Sciatic nerve (tissue), 2 donors: ENCODE measurements at regions of chr6 and their contacts with region 1.

Region 1: GRCh38 chr6:134174672-134175198 is 122.3 kb upstream of the SLC2A12 start:
- DNase-seq: peak; percentile 97
- ATAC-seq: peak; percentile 91

Region 2: GRCh38 chr6:134132494-134133141 is 42.1 kb before region 1 on chr6:
- intact Hi-C with region 1: no loop called
- DNase-seq: no peak
- ATAC-seq: no peak

Region 3: DNA sequence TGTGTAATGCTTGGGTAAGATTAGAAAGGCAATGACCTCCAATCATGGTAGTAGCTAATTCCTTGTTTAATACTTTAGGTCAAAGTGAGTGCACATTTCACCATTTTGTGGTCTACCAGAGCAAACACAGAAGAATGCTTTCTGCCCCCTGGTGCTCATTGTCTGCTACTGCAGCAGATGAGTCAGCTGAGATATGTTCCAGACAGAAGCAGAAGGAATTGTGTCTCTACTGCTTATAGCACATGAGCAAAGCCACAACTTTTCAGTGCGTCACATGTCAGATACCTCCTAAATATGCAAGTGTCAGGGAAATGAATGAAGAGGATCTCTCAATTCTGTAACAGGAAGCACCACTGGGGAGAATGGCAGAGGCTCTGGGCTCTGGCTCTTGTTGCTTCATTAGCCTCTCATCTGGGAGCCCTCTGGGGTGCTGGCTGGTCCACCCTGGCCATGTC is 466.3 kb after region 1 on chr6:
- intact Hi-C with region 1: loop called (anchors 5 kb)
- DNase-seq: peak; percentile 85
- ATAC-seq: peak; percentile 90

Region 4: GRCh38 chr6:134822920-134823709 is 648.4 kb after region 1 on chr6:
- intact Hi-C with region 1: loop called (anchors 5 kb)
- DNase-seq: no peak
- ATAC-seq: peak; percentile 89